Activated T-helper 1 cell treated with anti-CD3 and anti-CD28 coated beads, Interleukin-12 subunit alpha, Interleukin-12 subunit beta, Interleukin-2, Interleukin-4 antibody, amounts not matched to agents 30 ng/mL and 10 ng/mL and 1 ng/mL, durations not matched to agents 14 hours and 24 hours and 36 hours (primary cell): ENCODE measurements at regions of chr17 and their contacts with region 1.

Region 1: DNA sequence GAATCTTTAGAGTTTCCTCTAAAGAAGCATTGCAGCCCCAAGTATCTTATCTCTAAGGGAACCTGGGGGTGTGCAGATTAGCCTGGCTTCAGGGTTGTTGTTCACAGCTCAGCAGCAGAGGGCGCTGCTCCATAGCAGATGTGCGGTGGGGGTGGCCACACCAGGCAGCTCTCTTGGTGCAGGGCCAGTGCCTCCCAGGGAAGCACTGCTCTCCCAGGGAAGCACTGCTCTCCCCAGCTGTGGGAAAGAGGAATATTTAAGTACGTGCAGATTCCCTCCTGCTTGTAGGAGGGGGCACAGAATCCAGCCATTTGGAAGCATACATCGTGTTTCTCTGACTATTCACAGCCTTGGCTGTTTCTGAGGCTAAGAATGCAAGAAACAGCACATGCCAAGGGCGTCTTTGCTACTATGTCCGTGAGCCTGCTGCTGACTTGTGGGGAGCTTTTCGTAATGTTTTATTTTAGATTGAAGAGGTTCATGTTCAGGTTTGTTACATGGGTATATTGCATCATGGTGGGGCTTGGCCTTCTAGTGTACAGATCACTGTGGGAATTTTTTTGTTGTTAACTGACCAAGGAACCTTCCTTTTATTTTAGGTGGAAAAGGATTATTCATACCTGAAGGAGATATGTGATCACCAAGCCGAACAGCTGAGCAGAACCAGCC is 217.8 kb downstream of the SPECC1 start:
- DNase-seq: peak; percentile 74
- H3K4me3 Mint-ChIP-seq: no peak overlapping the region
- H3K27ac Mint-ChIP-seq: peak overlapping the region; percentile 31
- H3K4me1 Mint-ChIP-seq: peaks cover 18% of the 10 kb centered on the region
- H3K27me3 Mint-ChIP-seq: peaks cover 2% of the 10 kb centered on the region

Region 2: DNA sequence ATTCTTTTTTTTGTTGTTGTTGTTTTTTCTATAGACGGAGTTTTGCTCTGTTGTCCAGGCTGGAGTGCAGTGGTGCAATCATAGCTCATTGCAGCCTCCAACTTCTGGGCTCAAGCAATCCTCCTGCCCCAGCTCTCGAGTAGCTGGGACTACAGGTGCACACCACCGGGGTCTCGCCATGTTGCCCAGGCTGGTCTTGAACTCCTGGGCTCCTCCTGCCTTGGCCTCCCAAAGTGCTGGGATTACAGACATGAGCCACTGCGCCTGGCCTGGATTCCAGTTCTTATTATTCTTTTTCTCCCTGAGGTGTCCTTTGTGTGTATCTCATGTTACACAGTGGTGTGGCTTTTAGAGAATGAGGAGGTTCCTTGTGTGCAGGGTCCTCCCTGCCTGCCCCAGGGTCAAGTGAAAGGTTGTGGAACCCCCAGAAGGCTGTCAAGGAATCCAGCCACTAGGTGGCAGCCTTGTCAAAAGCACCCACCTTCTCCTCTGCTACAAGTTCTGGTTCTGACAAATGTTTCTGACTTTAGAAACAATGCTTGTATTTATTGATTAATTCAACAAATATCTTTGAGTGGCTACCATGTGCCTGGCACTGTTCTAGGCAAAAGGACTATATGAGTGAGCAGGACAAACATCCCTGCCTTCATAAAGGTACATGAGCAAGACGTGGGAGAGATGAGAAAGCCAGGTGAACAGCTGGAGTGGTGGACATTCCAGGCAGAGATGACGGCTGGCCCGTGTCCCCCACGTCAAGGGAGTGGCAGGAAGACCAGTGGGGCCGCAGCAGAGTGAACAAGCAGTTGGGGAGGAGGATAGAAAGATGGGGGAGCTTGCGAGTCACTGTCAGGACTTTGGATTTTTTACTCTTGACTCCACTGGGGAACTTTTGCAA is 105.3 kb before region 1 on chr17:
- intact Hi-C with region 1: loop called (anchors 1 kb)
- DNase-seq: peak; percentile 40
- H3K4me3 Mint-ChIP-seq: no peak overlapping the region
- H3K27ac Mint-ChIP-seq: no peak overlapping the region
- H3K4me1 Mint-ChIP-seq: peaks cover 4% of the 10 kb centered on the region
- H3K27me3 Mint-ChIP-seq: peaks cover 8% of the 10 kb centered on the region

Region 3: GRCh38 chr17:20184977-20185619 is 41.9 kb before region 1 on chr17:
- intact Hi-C with region 1: no loop called
- DNase-seq: no peak
- H3K4me3 Mint-ChIP-seq: no peak overlapping the region
- H3K27ac Mint-ChIP-seq: no peak overlapping the region
- H3K4me1 Mint-ChIP-seq: no peaks in the 10 kb centered on the region
- H3K27me3 Mint-ChIP-seq: peaks cover 13% of the 10 kb centered on the region

Region 4: DNA sequence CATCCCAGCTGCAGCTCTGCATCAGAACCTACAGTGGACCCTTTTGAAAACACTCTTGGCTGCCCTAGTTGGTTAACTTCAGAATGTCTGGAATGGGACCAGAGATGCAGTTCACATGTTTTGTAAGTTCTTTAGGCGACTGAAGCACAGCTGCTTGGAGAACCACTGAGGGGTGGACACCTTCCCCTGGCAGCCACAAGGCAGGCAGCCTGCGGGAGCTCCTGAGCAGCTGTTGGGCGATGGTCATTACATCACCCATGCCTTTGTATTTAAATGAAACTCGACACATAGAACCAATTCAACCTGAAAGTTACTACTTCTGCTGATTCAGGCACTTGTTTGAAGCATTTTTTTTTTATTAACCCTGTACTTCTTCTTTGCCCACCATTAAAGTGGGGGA is 88.9 kb after region 1 on chr17:
- intact Hi-C with region 1: loop called (anchors 1 kb)
- DNase-seq: no peak
- H3K4me3 Mint-ChIP-seq: no peak overlapping the region
- H3K27ac Mint-ChIP-seq: no peak overlapping the region
- H3K4me1 Mint-ChIP-seq: peaks cover under 1% of the 10 kb centered on the region
- H3K27me3 Mint-ChIP-seq: no peaks in the 10 kb centered on the region